Left ventricle myocardium superior (tissue), 1 donor: ENCODE measurements at regions of chr1 and their contacts with region 1.

Region 1: DNA sequence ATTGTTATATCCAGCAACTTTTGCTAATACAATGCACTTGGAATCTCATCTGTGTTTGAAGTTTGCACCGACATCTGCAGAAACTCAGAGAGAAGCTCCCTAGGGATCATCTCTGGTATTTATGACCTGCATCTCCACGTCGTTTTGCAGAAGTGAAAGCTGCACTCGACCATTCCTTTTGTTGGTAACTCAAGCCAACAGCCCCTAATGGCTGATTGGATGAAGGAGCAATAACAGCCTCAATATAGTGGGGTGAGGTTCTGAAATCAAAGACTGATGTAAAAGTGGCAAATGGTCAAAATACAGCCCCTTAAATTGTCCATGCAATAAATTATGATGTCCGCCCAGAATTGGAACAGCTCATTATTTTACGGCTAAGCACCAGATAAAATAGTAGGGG is 344.2 kb upstream of the KAZN start:
- DNase-seq: no peak
- ATAC-seq: no peak

Region 2: DNA sequence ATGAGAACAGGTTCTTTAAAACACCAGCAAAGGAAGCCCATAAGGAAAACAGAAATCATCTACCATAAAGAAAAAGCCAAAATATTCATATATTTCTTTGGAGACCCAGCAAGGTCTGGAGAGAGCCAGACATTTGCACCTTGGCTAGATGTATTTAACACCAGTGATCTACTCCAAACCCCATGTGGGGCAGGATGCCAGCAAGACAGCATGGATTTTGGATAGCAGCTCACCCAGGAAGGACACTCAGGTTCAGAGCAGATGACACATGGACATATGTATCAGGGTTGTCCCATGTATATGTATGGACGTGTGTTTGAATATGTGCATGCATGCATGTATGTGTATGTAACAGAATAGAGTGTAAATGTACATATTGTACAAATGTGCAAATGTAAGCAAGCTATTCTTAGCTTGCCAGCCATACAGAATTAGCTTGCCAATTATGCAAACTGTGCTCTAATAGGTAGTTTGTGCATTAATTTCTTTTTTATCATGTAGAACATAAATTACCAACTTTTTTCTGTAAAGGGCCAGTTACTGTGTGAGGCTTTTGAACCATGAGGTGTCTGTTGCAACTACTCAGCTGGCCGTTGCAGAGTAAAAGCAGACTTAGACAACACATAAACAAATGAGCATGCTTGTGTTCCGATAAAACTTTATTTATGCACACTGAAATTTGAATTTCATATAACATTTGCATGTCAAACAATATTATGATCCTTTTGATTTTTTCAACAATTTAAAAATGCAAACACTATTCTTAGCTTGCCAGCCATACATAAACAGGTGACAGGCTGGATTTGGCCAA is 270.8 kb after region 1 on chr1:
- intact Hi-C with region 1: loop called (anchors 5 kb)
- DNase-seq: no peak
- ATAC-seq: no peak